Astrocyte of the spinal cord (primary cell): ENCODE measurements at regions of chr1 and their contacts with region 1.

Region 1: DNA sequence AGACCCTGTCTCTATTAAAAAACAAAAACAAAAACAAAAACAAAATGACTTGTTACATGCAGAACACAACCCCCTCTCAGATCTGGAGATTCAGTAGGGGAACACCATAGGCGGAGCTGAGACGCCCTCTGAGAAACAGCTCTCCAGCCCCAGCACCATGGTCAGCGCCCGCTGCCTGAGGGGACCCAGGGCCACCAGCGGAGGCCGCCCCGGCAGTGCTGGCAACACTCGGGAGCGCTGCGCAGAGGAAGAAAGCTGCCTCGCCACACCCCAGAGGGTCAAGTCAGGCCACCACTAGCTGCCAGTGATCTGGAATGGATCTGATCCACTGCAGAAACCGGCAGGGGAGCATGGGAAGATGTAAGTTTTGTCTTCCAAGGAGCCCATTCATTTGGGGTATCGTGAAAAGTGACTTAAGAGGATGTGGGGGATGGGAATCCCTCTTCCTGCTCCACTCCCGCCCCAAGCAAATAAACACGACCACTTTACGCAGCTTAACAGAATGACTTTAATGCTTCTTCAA is 3.1 kb downstream of the ACTA1 start:
- DNase-seq: peak; percentile 53
- H3K4me3 ChIP-seq: no peak overlapping the region
- CTCF ChIP-seq: peak; percentile 10

Region 2: DNA sequence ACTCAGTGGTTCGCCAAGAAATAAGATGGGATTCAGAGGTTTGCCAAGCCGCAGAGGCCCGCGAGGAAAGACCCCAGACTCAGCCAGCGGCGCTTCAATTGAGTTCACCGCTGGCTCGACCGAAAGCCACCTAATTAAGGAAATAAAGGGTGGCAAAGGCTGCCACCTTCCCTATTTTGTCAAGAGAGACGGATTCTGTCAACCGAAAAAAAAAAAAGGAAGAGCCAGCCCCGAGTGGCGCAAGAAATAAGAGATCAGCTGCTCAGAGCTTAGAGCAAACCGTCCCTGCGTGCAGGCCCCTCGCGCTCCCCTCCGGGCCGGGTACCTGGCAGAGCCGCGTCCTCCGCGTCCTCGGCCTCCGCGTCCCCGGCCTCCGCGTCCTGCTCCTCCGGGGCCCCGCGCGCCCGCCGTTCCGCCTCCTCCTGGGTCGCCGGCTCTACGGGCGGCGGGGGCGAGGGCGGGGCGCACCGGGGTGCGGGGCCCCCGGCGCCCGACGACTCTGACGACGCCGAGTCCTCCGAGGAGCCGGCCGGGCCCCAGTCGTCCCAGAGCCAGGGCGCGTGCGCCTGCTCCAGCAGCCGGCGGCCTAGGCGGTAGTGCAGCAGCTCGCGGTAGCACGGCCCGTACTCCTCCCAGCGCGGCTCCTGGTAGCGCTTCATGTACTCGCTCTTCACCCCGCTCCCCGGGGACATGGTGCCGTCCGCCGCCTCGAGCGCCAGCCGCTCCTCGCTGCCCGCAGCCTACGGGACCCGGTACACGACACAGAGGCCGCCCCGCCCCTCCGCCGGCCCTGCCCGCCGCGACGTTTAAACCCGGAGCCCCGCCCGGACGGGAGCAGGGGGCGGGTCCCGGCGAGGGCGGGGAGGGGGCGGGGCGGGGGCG is 88.8 kb before region 1 on chr1:
- in situ Hi-C with region 1: loop called (anchors 25 kb)
- DNase-seq: peak; percentile 70
- H3K4me3 ChIP-seq: peak overlapping the region; percentile 64
- CTCF ChIP-seq: no peak